Left lung (tissue), 14 donors: ENCODE measurements at regions of chr4 and their contacts with region 1.

Region 1: DNA sequence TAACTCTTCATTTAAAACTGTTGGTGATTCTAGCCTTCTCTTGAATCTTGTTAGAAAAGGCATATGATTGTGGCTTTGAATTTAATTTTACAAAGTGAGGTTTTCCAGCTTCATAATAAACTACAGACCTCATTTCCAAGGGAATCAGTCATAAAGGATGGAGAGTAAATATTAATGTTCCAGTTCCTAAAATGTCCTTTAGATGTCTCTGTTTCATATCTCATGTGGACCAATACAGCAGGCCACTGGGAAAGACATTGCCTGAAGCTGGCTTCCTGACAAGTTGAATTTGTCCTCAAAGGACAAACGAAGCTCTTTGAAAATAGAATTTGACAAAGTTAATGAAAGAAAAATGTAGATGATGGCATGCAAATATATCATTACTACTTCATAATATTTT is 125.4 kb downstream of the ZNF330 start:
- DNase-seq: peak in 2 of 4 donors; percentile 53 to 72
- ATAC-seq: peak; percentile 87
- H3K4me3 ChIP-seq: no peak overlapping the region
- H3K27ac ChIP-seq: no peak overlapping the region
- H3K4me1 ChIP-seq: peaks cover 0 to 2% of the 10 kb centered on the region in 2 donors
- H3K27me3 ChIP-seq: no peaks in the 10 kb centered on the region
- CTCF ChIP-seq: peak; percentile 14 to 54

Region 2: GRCh38 chr4:141711014-141711610 is 365.0 kb after region 1 on chr4:
- intact Hi-C with region 1: loop called in 1 of 2 experiments (anchors 10 kb)
- DNase-seq: peak in 1 of 4 donors; percentile 21
- ATAC-seq: peak; percentile 52
- H3K4me3 ChIP-seq: no peak overlapping the region
- H3K27ac ChIP-seq: no peak overlapping the region
- H3K4me1 ChIP-seq: no peaks in the 10 kb centered on the region
- H3K27me3 ChIP-seq: no peaks in the 10 kb centered on the region
- CTCF ChIP-seq: peak; percentile 28 to 45